HepG2 (cell line): ENCODE measurements at regions of chr11 and their contacts with region 1.

Region 1: DNA sequence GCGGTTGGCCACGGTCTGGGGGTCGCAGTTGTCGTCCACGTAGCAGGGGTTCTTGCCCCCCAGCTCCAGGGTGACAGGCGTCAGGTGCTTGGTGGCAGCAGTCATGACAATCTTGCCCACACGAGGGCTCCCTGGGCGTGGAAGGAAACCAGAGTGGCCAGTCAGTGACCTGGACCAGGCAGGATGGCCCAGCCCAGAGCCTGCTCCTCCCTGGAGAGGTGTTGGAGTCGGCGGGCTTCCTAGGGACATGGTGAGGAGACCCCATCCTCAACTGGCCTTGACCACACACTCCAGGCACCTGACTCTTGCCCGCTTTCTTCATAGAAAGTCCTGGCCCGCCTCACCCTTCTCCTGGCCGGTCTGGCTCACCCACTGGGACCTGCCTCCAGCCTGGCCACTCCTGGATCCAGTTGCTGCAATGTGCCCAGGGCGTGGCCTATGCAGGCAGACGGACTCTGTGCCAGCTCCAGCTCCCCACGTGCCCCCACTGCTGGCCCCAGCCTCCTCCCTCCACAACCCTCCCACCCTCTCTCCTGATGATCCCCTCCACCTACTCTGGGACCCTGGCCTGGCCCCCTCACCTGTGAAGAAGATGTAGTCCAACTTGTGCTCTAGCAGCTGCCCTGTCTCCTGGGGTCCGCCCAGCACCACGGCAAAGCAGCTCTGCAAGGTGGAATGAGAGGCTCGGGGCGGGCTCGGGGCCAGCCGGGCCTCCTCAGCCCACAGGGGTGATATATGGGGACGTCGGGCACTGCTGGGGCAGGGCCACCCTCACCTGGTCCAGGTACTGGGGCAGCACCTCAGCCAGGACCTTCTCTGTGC is 8.7 kb downstream of the ALDH3B2 start:
- DNase-seq: no peak
- ATAC-seq: peak; percentile 75
- H3K4me3 ChIP-seq: no peak overlapping the region
- H3K27ac ChIP-seq: no peak overlapping the region
- H3K4me1 ChIP-seq: no peaks in the 10 kb centered on the region
- H3K27me3 ChIP-seq: peaks cover 1 to 17% of the 10 kb centered on the region in 2 experiments; a peak in 3 of 5 replicates
- CTCF ChIP-seq: peak; percentile 65
- EP300 ChIP-seq: no peak
- POLR2A ChIP-seq: no peak
- RAD21 ChIP-seq: peak; percentile 43; the same call in 1 of the 2 replicates

Region 2: DNA sequence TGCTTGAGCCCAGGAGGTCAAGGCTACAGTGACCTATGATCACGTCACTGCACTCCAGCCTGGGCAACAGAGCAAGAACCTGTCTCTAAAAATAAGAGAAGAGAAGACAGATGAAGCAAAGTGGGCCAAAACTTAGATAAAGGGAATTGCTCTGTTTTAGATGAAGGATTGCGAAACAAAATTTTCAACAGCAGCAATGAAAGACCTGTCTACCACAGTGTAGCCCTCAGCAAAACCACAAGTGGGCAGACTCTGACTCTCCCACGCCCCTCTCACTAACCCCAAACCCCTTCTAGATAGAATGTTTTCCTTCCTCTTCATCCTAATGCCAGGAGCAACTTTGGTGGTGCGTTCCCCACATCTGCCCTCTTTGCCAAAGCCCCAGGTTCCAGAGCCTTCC is 114.3 kb after region 1 on chr11:
- CTCF ChIA-PET with region 1: no interaction called
- POLR2A ChIA-PET with region 1: no interaction called
- in situ Hi-C with region 1: loop called (anchors 25 kb)
- intact Hi-C with region 1: no loop called
- DNase-seq: no peak
- ATAC-seq: no peak
- H3K4me3 ChIP-seq: no peak overlapping the region
- H3K27ac ChIP-seq: no peak overlapping the region
- H3K4me1 ChIP-seq: no peaks in the 10 kb centered on the region
- H3K27me3 ChIP-seq: 0 out of 5 replicates have a peak, but pooled peaks cover 0 to 1% of the 10 kb centered on the region in 2 experiments
- CTCF ChIP-seq: no peak
- EP300 ChIP-seq: no peak
- POLR2A ChIP-seq: no peak
- RAD21 ChIP-seq: no peak